Activated CD4-positive, alpha-beta T cell treated with anti-CD3 and anti-CD28 coated beads, Interleukin-2, amount 10 ng/mL, durations not matched to agents 24 days and 14 days (primary cell): ENCODE measurements at regions of chr14 and their contacts with region 1.

Region 1: GRCh38 chr14:73886449-73887317 is at the start of gene ZNF410:
- DNase-seq: peak; percentile 96
- H3K4me3 Mint-ChIP-seq: peak within 1 kb of the TSS; percentile 84
- H3K27ac Mint-ChIP-seq: peak within 1 kb of the TSS; percentile 99
- H3K4me1 Mint-ChIP-seq: peaks cover 38% of the 10 kb centered on the region
- H3K27me3 Mint-ChIP-seq: no peaks in the 10 kb centered on the region
- total RNA-seq, gene ZNF410: 62.7 and 70.2 TPM in 2 replicates

Region 2: GRCh38 chr14:73568381-73568781 is 318.3 kb before region 1 on chr14:
- intact Hi-C with region 1: loop called (anchors 1 kb)
- DNase-seq: peak; percentile 65
- H3K4me3 Mint-ChIP-seq: peak overlapping the region; percentile 93
- H3K27ac Mint-ChIP-seq: peak overlapping the region; percentile 98
- H3K4me1 Mint-ChIP-seq: peaks cover 31% of the 10 kb centered on the region
- H3K27me3 Mint-ChIP-seq: no peaks in the 10 kb centered on the region

Region 3: GRCh38 chr14:73728717-73729330 is 157.9 kb before region 1 on chr14:
- intact Hi-C with region 1: loop called (anchors 5 kb)
- DNase-seq: peak; percentile 96
- H3K4me3 Mint-ChIP-seq: peak overlapping the region; percentile 16
- H3K27ac Mint-ChIP-seq: peak overlapping the region; percentile 83
- H3K4me1 Mint-ChIP-seq: peaks cover 29% of the 10 kb centered on the region
- H3K27me3 Mint-ChIP-seq: no peaks in the 10 kb centered on the region

Region 4: DNA sequence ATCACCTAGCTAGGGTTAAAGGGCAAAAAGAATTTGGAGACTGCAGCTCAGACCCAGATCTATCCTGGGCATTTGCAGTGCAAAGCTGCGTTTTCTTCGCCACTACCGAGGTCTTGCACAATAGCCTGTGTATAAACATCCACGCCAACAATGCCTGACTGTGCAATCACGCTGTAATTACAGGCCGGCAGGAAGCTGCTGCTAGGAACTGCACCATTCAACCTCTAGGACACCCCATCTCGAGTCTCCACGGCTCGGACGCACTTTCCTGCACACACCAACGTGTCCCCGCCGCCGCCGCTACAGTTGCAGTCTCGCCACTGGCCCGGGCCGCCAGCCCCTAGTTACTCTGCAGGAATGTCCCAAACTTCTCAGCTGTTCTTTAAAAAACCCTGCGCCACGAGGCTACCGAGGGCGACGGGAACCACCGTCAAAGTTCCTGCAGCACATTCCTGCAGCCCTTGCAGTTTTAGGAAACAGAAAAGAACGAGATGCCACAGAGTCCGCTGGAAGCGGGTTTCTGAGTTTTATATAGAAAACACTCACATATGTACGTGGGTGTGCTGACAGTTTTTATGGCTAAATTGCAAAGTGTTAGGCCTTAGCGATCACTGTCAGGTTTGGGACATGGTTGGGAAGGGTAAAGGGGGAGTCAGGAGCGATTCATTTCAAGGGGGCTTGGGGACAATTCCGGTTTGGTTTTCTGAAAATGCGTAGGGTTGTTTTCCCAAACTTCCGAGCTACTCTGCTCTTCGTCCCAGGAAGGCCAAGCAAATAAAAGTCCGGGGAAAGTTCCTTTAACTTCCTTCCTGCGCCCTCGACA is 100.6 kb before region 1 on chr14:
- intact Hi-C with region 1: loop called (anchors 1 kb)
- DNase-seq: peak; percentile 91
- H3K4me3 Mint-ChIP-seq: peak overlapping the region; percentile 94
- H3K27ac Mint-ChIP-seq: peak overlapping the region; percentile 95
- H3K4me1 Mint-ChIP-seq: peaks cover 60% of the 10 kb centered on the region
- H3K27me3 Mint-ChIP-seq: no peaks in the 10 kb centered on the region

Region 5: GRCh38 chr14:73862480-73862879 is 24.2 kb before region 1 on chr14:
- intact Hi-C with region 1: no loop called
- DNase-seq: no peak
- H3K4me3 Mint-ChIP-seq: no peak overlapping the region
- H3K27ac Mint-ChIP-seq: no peak overlapping the region
- H3K4me1 Mint-ChIP-seq: no peaks in the 10 kb centered on the region
- H3K27me3 Mint-ChIP-seq: no peaks in the 10 kb centered on the region

Region 6: DNA sequence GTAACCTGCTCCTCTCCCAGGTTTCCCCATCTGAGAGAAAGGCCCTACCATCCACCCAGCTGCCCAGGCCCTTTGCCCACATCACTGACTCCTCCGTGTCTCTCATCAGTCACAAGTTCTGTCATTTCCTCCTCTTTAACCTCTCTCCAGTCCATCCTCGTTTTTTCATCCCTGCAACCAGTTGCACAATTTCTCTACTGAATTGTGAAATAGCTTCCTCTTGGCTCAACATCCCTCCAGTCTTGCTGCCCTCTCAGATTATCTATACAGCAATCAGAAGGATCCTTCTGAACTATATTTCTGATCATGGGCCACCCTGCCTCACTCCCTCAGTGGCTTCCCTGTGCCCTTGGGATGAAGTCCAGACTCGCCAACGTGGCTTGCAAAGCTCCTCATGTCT is 56.4 kb after region 1 on chr14:
- intact Hi-C with region 1: no loop called
- DNase-seq: no peak
- H3K4me3 Mint-ChIP-seq: no peak overlapping the region
- H3K27ac Mint-ChIP-seq: no peak overlapping the region
- H3K4me1 Mint-ChIP-seq: peaks cover 2% of the 10 kb centered on the region
- H3K27me3 Mint-ChIP-seq: no peaks in the 10 kb centered on the region

Region 7: DNA sequence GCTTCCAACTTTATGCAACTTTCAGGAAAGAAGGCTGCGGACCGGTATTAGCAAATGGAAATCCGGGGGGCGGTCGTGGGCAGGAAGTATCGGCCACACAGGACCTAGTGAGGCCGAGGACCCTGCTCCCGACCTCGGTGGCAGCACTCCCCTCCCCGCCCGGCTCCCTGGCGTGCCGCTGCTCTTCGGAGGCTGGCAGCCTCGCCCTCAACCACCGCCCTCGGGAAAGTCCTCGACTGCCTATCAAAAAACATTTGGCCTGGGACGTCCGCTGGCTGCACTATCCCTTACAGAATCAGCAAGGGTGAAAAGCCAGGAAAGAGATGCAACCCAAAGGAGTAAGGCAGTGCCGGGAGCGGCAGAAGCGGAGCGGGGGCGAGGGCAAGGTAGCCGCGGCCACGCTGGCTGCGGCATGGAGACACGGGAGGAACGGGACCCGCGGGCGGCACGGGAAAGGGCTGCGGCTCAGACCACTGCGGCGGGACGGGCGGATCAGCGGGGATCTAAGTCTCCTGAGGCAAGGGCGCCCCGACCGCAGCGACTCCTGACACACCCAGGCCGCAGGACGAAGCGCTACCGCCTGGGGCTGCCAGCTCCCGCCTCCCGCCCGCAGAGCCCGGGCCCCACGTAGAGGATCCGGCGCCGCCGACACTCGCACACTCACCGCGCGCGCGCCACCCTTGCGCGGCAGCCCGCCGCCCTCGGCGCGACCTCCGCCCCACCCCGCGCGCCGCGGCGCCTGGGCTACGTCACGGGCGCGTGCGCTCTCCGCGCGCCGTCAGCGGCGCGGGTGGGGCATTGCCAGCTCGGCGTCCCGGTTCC is 132.1 kb after region 1 on chr14 and contains the starts of genes BBOF1 and ENTPD5:
- intact Hi-C with region 1: loop called (anchors 2 kb)
- DNase-seq: peak; percentile 97
- H3K4me3 Mint-ChIP-seq: peak within 1 kb of the TSS; percentile 92
- H3K27ac Mint-ChIP-seq: peak within 1 kb of the TSS; percentile 97
- H3K4me1 Mint-ChIP-seq: peaks cover 17% of the 10 kb centered on the region
- H3K27me3 Mint-ChIP-seq: no peaks in the 10 kb centered on the region
- total RNA-seq, gene BBOF1: 0.57 and 0.72 TPM in 2 replicates
- total RNA-seq, gene ENTPD5: 10.6 and 12.2 TPM in 2 replicates